Psoas muscle (tissue), 8 donors: ENCODE measurements at regions of chr9 and their contacts with region 1.

Region 1: DNA sequence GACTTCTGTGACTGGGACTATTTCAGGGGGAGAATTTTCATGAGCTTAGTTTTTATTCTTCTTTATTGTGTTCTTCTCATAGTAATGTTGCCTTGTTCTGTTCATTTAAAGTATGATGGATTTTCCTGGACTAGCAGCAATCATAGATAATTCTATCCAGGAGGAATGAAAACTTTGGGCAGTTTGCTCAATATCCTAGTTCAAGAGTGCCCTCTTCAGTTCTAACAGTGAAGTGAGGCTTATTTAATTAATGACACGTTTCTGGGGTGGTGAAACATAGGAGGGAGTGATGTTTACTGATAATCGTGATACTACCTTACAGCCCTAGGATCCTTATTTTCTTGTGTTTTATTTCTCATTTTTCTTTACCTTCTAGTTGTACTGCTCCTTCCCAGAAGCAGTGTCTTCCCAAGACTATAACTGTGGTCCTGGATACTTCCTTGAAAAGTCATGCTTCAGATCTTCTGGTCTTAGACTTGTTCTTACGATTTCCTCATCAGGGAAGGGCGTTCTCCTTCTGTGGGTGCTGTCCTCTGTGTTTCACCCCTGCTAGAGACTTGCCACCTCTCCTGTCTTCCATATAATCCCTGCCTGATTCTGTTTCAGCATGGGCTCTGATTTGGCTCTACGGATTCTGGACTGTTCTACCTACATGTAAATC is 57.4 kb downstream of the CFAP95 start:
- DNase-seq: no peak
- ATAC-seq: peak; percentile 65 to 84 (median 72)
- H3K4me3 ChIP-seq: no peak overlapping the region
- H3K27ac ChIP-seq: no peak overlapping the region
- H3K4me1 ChIP-seq: peaks cover 13% of the 10 kb centered on the region
- H3K27me3 ChIP-seq: no peaks in the 10 kb centered on the region
- CTCF ChIP-seq: peak; percentile 60

Region 2: DNA sequence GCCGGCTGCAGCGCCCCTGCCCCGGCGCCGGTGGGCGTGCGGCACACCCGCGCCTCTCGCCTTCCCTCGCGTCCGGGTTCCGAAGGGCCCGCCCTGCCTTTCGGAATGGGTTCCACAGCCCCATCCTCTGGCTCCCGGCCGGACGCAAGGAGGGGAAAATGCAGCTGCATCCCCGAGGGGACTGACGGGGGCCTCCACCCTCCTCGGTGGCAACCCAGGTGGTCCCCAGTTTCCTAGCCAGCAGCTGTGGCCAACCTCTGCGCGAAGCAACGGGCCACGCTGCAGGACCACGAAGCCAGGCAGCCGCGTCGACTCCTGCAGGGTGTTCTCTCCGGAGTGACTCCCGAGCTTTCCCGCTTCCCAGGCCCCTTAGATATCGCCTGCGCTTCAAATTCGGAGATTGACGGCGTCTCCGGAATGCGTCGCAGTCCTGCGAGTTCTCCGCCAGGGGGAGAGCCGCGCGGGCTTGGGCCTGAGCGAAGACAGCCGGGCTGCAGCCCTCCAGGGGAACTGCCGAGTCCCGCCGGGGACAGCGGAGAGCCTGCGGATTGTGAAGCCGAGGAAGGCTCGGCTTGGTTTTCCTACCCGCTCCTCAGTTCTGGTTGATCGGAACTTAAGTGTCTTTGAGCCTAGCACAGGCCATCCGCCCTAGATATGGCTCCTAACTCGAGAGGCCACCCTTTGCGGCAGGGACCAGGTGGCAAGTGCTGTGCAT is 205.2 kb before region 1 on chr9:
- intact Hi-C with region 1: loop called (anchors 2 to 5 kb)
- DNase-seq: peak; percentile 84 to 92
- ATAC-seq: peak; percentile 91 to 94 (median 94)
- H3K4me3 ChIP-seq: peak overlapping the region; percentile 78
- H3K27ac ChIP-seq: peak overlapping the region; percentile 65
- H3K4me1 ChIP-seq: peaks cover 3% of the 10 kb centered on the region
- H3K27me3 ChIP-seq: no peaks in the 10 kb centered on the region
- CTCF ChIP-seq: peak; percentile 89

Region 3: DNA sequence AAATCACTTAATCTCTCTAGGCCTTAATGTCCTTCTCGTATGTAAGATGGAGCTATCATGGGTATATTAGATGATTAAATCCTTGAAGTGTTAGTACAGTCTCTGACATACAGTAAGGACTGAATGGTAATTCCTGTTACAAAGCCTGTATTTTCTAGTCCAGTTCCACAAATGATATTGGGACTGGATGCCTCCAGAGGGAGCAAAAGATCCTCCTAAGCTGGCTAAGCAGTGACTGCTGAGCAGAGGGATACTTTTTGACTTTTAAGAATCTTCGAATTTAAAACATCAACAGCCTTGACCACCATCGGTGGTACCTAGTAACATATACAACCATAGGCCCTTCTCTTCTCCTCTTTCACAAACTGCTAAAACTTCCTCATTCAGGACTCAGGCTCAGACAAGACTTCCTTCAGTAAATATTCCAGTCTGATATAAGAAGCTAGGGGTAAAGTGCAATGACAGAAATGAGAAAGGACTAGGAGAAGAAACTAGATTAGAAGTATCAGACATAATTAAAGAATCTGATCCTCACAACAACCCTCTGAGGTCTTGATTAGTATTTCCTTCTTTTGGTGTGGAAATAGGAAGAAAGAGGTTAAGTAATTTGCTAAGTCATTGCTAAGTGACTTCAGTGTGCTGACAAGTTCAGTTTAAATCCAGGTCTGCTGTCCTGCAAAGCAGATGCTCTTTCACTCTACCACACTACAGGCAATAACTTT is 132.1 kb before region 1 on chr9:
- intact Hi-C with region 1: loop called in 1 of 2 experiments (anchors 10 kb)
- DNase-seq: no peak
- ATAC-seq: peak in 2 of 4 donors; percentile 43 to 45
- H3K4me3 ChIP-seq: no peak overlapping the region
- H3K27ac ChIP-seq: no peak overlapping the region
- H3K4me1 ChIP-seq: peaks cover 34% of the 10 kb centered on the region
- H3K27me3 ChIP-seq: no peaks in the 10 kb centered on the region
- CTCF ChIP-seq: no peak

Region 4: GRCh38 chr9:69759421-69760277 is 118.3 kb before region 1 on chr9 and contains the start of gene PTAR1:
- intact Hi-C with region 1: loop called in 1 of 2 experiments (anchors 10 kb)
- DNase-seq: peak; percentile 93 to 96
- ATAC-seq: peak; percentile 95 to 98 (median 96)
- H3K4me3 ChIP-seq: peak within 1 kb of the TSS; percentile 94
- H3K27ac ChIP-seq: peak within 1 kb of the TSS; percentile 98
- H3K4me1 ChIP-seq: peaks cover 29% of the 10 kb centered on the region
- H3K27me3 ChIP-seq: no peaks in the 10 kb centered on the region
- CTCF ChIP-seq: no peak
- total RNA-seq, gene PTAR1: 24.0 to 27.9 (median 26.3) TPM

Region 5: GRCh38 chr9:69822091-69822750 is 55.8 kb before region 1 on chr9:
- intact Hi-C with region 1: loop called in 1 of 2 experiments (anchors 10 kb)
- DNase-seq: no peak
- ATAC-seq: no peak
- H3K4me3 ChIP-seq: no peak overlapping the region
- H3K27ac ChIP-seq: no peak overlapping the region
- H3K4me1 ChIP-seq: no peaks in the 10 kb centered on the region
- H3K27me3 ChIP-seq: peaks cover 0 to 10% (median 6%) of the 10 kb centered on the region in 3 donors
- CTCF ChIP-seq: no peak